Sigmoid colon (tissue), 7 donors: ENCODE measurements at regions of chr6 and their contacts with region 1.

Region 1: GRCh38 chr6:13711733-13712598 is at the start of gene RANBP9:
- DNase-seq: peak; percentile 96
- H3K4me3 ChIP-seq: peak within 1 kb of the TSS; percentile 71 to 91 (median 88)
- H3K27ac ChIP-seq: peak within 1 kb of the TSS; percentile 95 to 97 (median 96)
- H3K4me1 ChIP-seq: peaks cover 0 to 30% (median 24%) of the 10 kb centered on the region in 4 donors
- H3K27me3 ChIP-seq: no peaks in the 10 kb centered on the region
- CTCF ChIP-seq: no peak
- EP300 ChIP-seq: peak in 2 of 4 donors; percentile 4 to 39
- POLR2A ChIP-seq: peak; percentile 17 to 59
- total RNA-seq, gene RANBP9: 49.6 to 84.3 (median 55.3) TPM

Region 2: DNA sequence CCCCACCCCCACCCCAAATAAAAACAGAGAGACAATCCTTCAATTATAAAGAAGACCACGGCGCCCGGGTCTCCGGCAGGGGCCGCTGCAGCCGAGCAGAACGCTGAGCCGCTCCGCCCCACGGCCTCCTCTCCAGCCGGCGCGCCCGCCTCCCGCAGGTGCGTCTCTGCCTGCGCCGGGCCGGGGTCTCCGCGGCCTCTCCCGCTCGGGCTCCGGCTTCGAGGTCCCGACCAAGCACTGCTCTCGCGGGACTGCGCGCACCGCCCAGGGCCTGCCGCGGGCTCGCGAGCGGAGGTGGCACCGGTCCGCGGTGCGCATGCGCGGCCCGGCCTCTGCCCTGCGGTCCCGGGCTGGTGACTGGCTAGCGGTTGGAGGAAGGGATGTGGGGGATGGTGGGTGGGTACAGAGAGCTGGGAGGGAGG is 137.8 kb before region 1 on chr6:
- intact Hi-C with region 1: loop called (anchors 2 kb)
- DNase-seq: peak; percentile 95
- H3K4me3 ChIP-seq: peak overlapping the region; percentile 61 to 97 (median 87)
- H3K27ac ChIP-seq: peak overlapping the region; percentile 88 to 99 (median 98)
- H3K4me1 ChIP-seq: peaks cover 0 to 18% (median 8%) of the 10 kb centered on the region in 4 donors
- H3K27me3 ChIP-seq: no peaks in the 10 kb centered on the region
- CTCF ChIP-seq: peak in 1 of 4 experiments; percentile 45
- EP300 ChIP-seq: no peak
- POLR2A ChIP-seq: no peak

Region 3: GRCh38 chr6:13614926-13615798 is 96.8 kb before region 1 on chr6 and contains the start of gene NOL7:
- intact Hi-C with region 1: loop called (anchors 1 kb)
- DNase-seq: peak; percentile 99
- H3K4me3 ChIP-seq: peak within 1 kb of the TSS; percentile 61 to 91 (median 72)
- H3K27ac ChIP-seq: peak within 1 kb of the TSS; percentile 84 to 95 (median 86)
- H3K4me1 ChIP-seq: peaks cover 0 to 30% (median 26%) of the 10 kb centered on the region in 4 donors
- H3K27me3 ChIP-seq: no peaks in the 10 kb centered on the region
- CTCF ChIP-seq: peak; percentile 83 to 94 (median 89)
- EP300 ChIP-seq: no peak
- POLR2A ChIP-seq: peak; percentile 62 to 84
- total RNA-seq, gene NOL7: 87.8 to 97.6 (median 89.8) TPM

Region 4: GRCh38 chr6:13733178-13733887 is 21.4 kb after region 1 on chr6:
- intact Hi-C with region 1: loop called (anchors 2 kb)
- DNase-seq: peak; percentile 98
- H3K4me3 ChIP-seq: peak overlapping the region in 3 of 4 donors; percentile 17 to 29 (median 25)
- H3K27ac ChIP-seq: peak overlapping the region; percentile 31 to 78 (median 74)
- H3K4me1 ChIP-seq: peaks cover 0 to 25% (median 17%) of the 10 kb centered on the region in 4 donors
- H3K27me3 ChIP-seq: no peaks in the 10 kb centered on the region
- CTCF ChIP-seq: no peak
- EP300 ChIP-seq: peak in 3 of 4 donors; percentile 88 to 94 (median 88)
- POLR2A ChIP-seq: no peak

Region 5: GRCh38 chr6:13767121-13767808 is 55.3 kb after region 1 on chr6:
- intact Hi-C with region 1: loop called (anchors 1 kb)
- DNase-seq: peak; percentile 89
- H3K4me3 ChIP-seq: peak overlapping the region; percentile 10 to 45 (median 42)
- H3K27ac ChIP-seq: peak overlapping the region; percentile 46 to 79 (median 76)
- H3K4me1 ChIP-seq: peaks cover 0 to 34% (median 27%) of the 10 kb centered on the region in 4 donors
- H3K27me3 ChIP-seq: no peaks in the 10 kb centered on the region
- CTCF ChIP-seq: no peak
- EP300 ChIP-seq: peak in 2 of 4 donors; percentile 29 to 44
- POLR2A ChIP-seq: peak in 1 of 2 donors; percentile 18

Region 6: GRCh38 chr6:13814176-13814937 is 102.4 kb after region 1 on chr6 and contains the start of gene MCUR1:
- intact Hi-C with region 1: loop called (anchors 1 kb)
- DNase-seq: peak; percentile 93
- H3K4me3 ChIP-seq: peak within 1 kb of the TSS; percentile 79 to 86 (median 82)
- H3K27ac ChIP-seq: peak within 1 kb of the TSS; percentile 92 to 99 (median 98)
- H3K4me1 ChIP-seq: peaks cover 0 to 39% (median 36%) of the 10 kb centered on the region in 4 donors
- H3K27me3 ChIP-seq: no peaks in the 10 kb centered on the region
- CTCF ChIP-seq: no peak
- EP300 ChIP-seq: no peak
- POLR2A ChIP-seq: no peak
- total RNA-seq, gene MCUR1: 7.2 to 13.2 (median 9.0) TPM

Region 7: DNA sequence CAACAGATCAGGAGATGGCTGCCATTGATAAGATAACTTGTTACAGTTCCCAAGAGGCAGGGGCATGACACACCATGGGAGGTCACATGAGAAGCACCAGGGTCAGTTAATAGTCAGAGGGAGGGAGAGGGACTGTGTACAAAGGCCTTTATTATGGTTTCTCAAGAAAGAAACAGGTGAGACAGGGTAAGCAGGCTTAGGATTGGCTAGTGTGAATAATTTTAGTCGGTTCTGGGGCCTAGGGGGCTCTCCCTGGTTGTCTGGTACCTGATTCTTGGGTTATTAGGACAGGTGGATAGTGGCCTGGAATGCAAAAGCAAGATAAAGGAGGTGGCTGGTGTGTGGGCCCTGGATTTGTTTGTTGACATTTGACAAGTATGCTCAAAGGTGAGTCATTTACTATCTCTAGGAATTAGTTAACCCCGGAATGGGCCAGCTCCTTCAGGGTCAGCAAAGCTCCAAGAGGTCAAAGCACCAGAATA is 151.7 kb after region 1 on chr6:
- intact Hi-C with region 1: no loop called
- DNase-seq: no peak
- H3K4me3 ChIP-seq: no peak overlapping the region
- H3K27ac ChIP-seq: no peak overlapping the region
- H3K4me1 ChIP-seq: peaks cover 0 to 10% (median 9%) of the 10 kb centered on the region in 4 donors
- H3K27me3 ChIP-seq: peaks cover 17 to 22% (median 20%) of the 10 kb centered on the region in 3 donors
- CTCF ChIP-seq: no peak
- EP300 ChIP-seq: no peak
- POLR2A ChIP-seq: no peak

Region 8: GRCh38 chr6:13935190-13935880 is 223.4 kb after region 1 on chr6:
- intact Hi-C with region 1: no loop called
- DNase-seq: no peak
- H3K4me3 ChIP-seq: no peak overlapping the region
- H3K27ac ChIP-seq: no peak overlapping the region
- H3K4me1 ChIP-seq: no peaks in the 10 kb centered on the region
- H3K27me3 ChIP-seq: peaks cover 0 to 16% (median 7%) of the 10 kb centered on the region in 3 donors
- CTCF ChIP-seq: no peak
- EP300 ChIP-seq: no peak
- POLR2A ChIP-seq: no peak

Region 9: DNA sequence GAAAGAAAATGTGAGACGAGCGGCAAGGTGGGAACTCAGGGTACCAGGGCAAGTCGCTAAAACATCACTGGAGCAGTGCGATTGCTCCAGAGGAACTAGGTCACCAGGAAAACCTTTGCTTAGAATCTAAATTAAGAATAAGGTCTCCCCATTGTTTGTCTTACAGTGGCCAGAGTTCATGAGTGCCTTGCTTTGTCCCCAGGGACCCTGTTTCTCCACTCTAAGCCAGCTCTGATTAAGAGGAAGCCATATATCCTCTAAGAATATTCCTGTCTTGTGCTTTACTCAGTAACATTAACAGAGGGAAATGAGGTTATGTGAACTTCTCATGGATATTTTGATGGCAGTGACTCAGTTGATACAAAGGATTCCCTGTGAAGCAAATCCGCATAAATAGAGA is 711.4 kb after region 1 on chr6:
- intact Hi-C with region 1: no loop called
- DNase-seq: no peak
- H3K4me3 ChIP-seq: no peak overlapping the region
- H3K27ac ChIP-seq: no peak overlapping the region
- H3K4me1 ChIP-seq: no peaks in the 10 kb centered on the region
- H3K27me3 ChIP-seq: no peaks in the 10 kb centered on the region
- CTCF ChIP-seq: no peak
- EP300 ChIP-seq: no peak
- POLR2A ChIP-seq: no peak